T-cell (primary cell): ENCODE measurements at regions of chr2 and their contacts with region 1.

Region 1: DNA sequence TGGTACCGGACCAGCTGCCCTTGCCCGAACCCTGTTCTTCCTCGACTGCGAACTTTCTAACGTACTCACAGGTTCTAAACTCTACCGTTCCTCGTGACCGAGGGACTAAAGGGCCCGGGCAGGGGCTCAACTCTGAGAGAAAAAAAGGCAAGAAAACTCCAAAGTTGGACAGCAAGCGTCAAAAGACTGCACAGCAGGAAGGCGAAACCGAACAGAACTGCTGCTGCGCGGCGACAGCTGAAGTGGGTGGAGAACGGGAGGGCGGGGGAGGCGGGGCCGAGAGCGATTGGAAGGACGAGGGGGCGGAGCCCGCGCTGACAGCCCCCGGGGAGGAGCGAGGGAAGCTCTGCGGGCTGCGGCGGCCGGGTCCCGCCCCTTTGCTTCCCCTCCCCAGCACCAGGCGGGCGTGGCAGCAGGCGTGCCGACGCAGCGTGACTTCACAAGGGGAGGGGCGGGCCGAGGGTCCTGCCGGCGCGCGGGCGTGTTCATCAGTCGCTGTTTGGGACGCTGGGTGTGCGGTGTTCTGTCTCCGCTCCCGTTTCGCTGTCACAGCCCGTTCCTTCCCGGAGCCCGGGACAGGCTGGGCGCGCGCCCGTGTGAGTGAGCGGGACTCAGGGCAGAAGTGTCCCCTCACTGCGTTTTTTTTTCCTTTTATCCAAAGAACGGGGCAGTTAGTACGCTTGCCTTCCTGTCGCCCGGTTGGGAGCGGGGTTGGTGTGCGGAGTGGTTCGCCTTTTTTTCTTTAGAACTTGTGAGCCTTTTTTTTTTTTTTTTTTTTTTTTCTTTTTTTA is at the start of gene NABP1:
- DNase-seq: peak; percentile 93 to 100 (median 99)
- ATAC-seq: peak; percentile 88 to 95 (median 90)
- H3K4me3 ChIP-seq: peak within 1 kb of the TSS; percentile 78 to 93
- H3K4me3 Mint-ChIP-seq: peak within 1 kb of the TSS; percentile 97 to 99 (median 98)
- H3K27ac ChIP-seq: peak within 1 kb of the TSS; percentile 96
- H3K27ac Mint-ChIP-seq: peak within 1 kb of the TSS; percentile 100
- H3K4me1 ChIP-seq: peaks cover 36 to 37% of the 10 kb centered on the region in 2 experiments
- H3K4me1 Mint-ChIP-seq: peaks cover 58 to 70% (median 66%) of the 10 kb centered on the region in 3 donors
- H3K27me3 ChIP-seq: no peaks in the 10 kb centered on the region
- H3K27me3 Mint-ChIP-seq: no peaks in the 10 kb centered on the region
- total RNA-seq, gene NABP1: 39.0 to 67.6 (median 51.3) TPM

Region 2: GRCh38 chr2:189954989-189955388 is 1722.9 kb before region 1 on chr2:
- CTCF ChIA-PET with region 1: no interaction called
- POLR2A ChIA-PET with region 1: no interaction called
- DNase-seq: no peak
- ATAC-seq: no peak
- H3K4me3 ChIP-seq: no peak overlapping the region
- H3K4me3 Mint-ChIP-seq: no peak overlapping the region
- H3K27ac ChIP-seq: no peak overlapping the region
- H3K27ac Mint-ChIP-seq: no peak overlapping the region
- H3K4me1 ChIP-seq: no peaks in the 10 kb centered on the region
- H3K4me1 Mint-ChIP-seq: peaks cover 0 to 5% (median 2%) of the 10 kb centered on the region in 3 donors
- H3K27me3 ChIP-seq: no peaks in the 10 kb centered on the region
- H3K27me3 Mint-ChIP-seq: peaks cover 0 to 9% of the 10 kb centered on the region in 2 donors

Region 3: DNA sequence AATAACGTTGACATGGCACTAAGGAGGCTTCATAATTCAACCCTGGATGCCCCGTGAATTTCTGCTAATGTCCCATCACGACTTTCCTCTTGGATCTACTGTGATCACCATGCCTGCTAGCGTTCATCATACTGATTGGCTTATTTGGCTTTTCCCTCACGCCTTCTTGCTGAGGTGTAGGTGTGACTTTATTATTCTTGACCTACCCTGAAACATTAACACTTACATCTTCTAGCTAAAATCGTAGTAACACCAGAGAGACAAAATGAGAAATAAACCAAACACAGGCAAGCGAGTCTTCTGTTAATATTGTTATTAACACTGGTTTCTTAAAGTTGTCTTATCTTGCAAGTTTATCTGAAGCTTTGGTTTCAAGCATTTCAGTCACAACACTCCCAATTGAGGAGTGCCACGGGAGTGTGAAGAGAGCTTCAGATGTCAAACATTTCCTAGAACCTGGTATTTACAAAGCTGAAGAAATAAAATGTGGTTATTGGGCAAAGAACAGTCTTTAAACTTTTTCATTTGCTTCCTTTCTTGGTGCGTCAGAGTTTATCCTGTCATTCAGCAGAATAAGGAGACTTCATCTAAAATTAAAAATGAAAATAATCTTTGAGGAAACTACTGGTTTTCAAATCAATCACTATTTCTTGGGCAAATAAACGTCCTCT is 648.4 kb before region 1 on chr2:
- CTCF ChIA-PET with region 1: no interaction called
- POLR2A ChIA-PET with region 1: interaction called in 1 of 2 experiments, 11 read pairs
- DNase-seq: peak in 1 of 35 experiments; percentile 32
- ATAC-seq: peak in 3 of 4 experiments; percentile 8 to 74 (median 27)
- H3K4me3 ChIP-seq: no peak overlapping the region
- H3K4me3 Mint-ChIP-seq: peak overlapping the region in 2 of 3 donors; percentile 10 to 61
- H3K27ac ChIP-seq: peak overlapping the region; percentile 70
- H3K27ac Mint-ChIP-seq: peak overlapping the region; percentile 81 to 87
- H3K4me1 ChIP-seq: peaks cover 17 to 26% of the 10 kb centered on the region in 2 experiments
- H3K4me1 Mint-ChIP-seq: peaks cover 45 to 54% (median 50%) of the 10 kb centered on the region in 3 donors
- H3K27me3 ChIP-seq: no peaks in the 10 kb centered on the region
- H3K27me3 Mint-ChIP-seq: no peaks in the 10 kb centered on the region

Region 4: GRCh38 chr2:191566344-191566743 is 111.5 kb before region 1 on chr2:
- CTCF ChIA-PET with region 1: interaction called, 8 to 14 read pairs
- POLR2A ChIA-PET with region 1: interaction called in 1 of 2 experiments, 8 read pairs
- DNase-seq: peak; percentile 7 to 83 (median 55)
- ATAC-seq: peak; percentile 57 to 67 (median 65)
- H3K4me3 ChIP-seq: no peak overlapping the region
- H3K4me3 Mint-ChIP-seq: no peak overlapping the region
- H3K27ac ChIP-seq: no peak overlapping the region
- H3K27ac Mint-ChIP-seq: no peak overlapping the region
- H3K4me1 ChIP-seq: peaks cover 10 to 16% of the 10 kb centered on the region in 2 experiments
- H3K4me1 Mint-ChIP-seq: peaks cover 16 to 28% (median 17%) of the 10 kb centered on the region in 3 donors
- H3K27me3 ChIP-seq: peaks cover 0 to 13% of the 10 kb centered on the region in 2 experiments
- H3K27me3 Mint-ChIP-seq: peaks cover 20 to 25% of the 10 kb centered on the region in 2 donors

Region 5: GRCh38 chr2:191617575-191617974 is 60.3 kb before region 1 on chr2:
- CTCF ChIA-PET with region 1: interaction called in 1 of 2 experiments, 18 read pairs
- POLR2A ChIA-PET with region 1: interaction called, 22 to 48 read pairs
- DNase-seq: peak in 34 of 35 experiments; percentile 14 to 88 (median 46)
- ATAC-seq: peak; percentile 86 to 96 (median 92)
- H3K4me3 ChIP-seq: no peak overlapping the region
- H3K4me3 Mint-ChIP-seq: peak overlapping the region in 2 of 3 donors; percentile 6 to 15
- H3K27ac ChIP-seq: peak overlapping the region; percentile 89
- H3K27ac Mint-ChIP-seq: peak overlapping the region; percentile 91 to 99
- H3K4me1 ChIP-seq: peaks cover 13 to 17% of the 10 kb centered on the region in 2 experiments
- H3K4me1 Mint-ChIP-seq: peaks cover 42 to 52% (median 48%) of the 10 kb centered on the region in 3 donors
- H3K27me3 ChIP-seq: no peaks in the 10 kb centered on the region
- H3K27me3 Mint-ChIP-seq: no peaks in the 10 kb centered on the region

Region 6: GRCh38 chr2:191625016-191625415 is 52.8 kb before region 1 on chr2:
- CTCF ChIA-PET with region 1: interaction called in 1 of 2 experiments, 6 read pairs
- POLR2A ChIA-PET with region 1: interaction called, 7 to 28 read pairs
- DNase-seq: peak in 33 of 35 experiments; percentile 27 to 80 (median 56)
- ATAC-seq: peak; percentile 54 to 86 (median 78)
- H3K4me3 ChIP-seq: no peak overlapping the region
- H3K4me3 Mint-ChIP-seq: peak overlapping the region in 1 of 3 donors; percentile 10
- H3K27ac ChIP-seq: peak overlapping the region; percentile 78
- H3K27ac Mint-ChIP-seq: peak overlapping the region; percentile 41 to 47
- H3K4me1 ChIP-seq: peaks cover 2 to 22% of the 10 kb centered on the region in 2 experiments
- H3K4me1 Mint-ChIP-seq: peaks cover 59 to 81% (median 62%) of the 10 kb centered on the region in 3 donors
- H3K27me3 ChIP-seq: no peaks in the 10 kb centered on the region
- H3K27me3 Mint-ChIP-seq: no peaks in the 10 kb centered on the region

Region 7: GRCh38 chr2:191637182-191638078 is 40.4 kb before region 1 on chr2:
- CTCF ChIA-PET with region 1: interaction called, 3 to 4 read pairs
- POLR2A ChIA-PET with region 1: interaction called, 7 to 11 read pairs
- DNase-seq: peak in 1 of 35 experiments; percentile 56
- ATAC-seq: peak; percentile 90 to 98 (median 95)
- H3K4me3 ChIP-seq: no peak overlapping the region
- H3K4me3 Mint-ChIP-seq: peak overlapping the region; percentile 13 to 55 (median 51)
- H3K27ac ChIP-seq: peak overlapping the region; percentile 66
- H3K27ac Mint-ChIP-seq: peak overlapping the region; percentile 96
- H3K4me1 ChIP-seq: peaks cover 20 to 32% of the 10 kb centered on the region in 2 experiments
- H3K4me1 Mint-ChIP-seq: peaks cover 54 to 60% (median 59%) of the 10 kb centered on the region in 3 donors
- H3K27me3 ChIP-seq: no peaks in the 10 kb centered on the region
- H3K27me3 Mint-ChIP-seq: no peaks in the 10 kb centered on the region

Region 8: GRCh38 chr2:191740016-191740419 is 62.2 kb after region 1 on chr2:
- CTCF ChIA-PET with region 1: interaction called in 1 of 2 experiments, 5 read pairs
- POLR2A ChIA-PET with region 1: interaction called in 1 of 2 experiments, 10 read pairs
- DNase-seq: peak in 32 of 35 experiments; percentile 3 to 83 (median 34)
- ATAC-seq: peak; percentile 91 to 95 (median 94)
- H3K4me3 ChIP-seq: no peak overlapping the region
- H3K4me3 Mint-ChIP-seq: peak overlapping the region in 1 of 3 donors; percentile 0
- H3K27ac ChIP-seq: no peak overlapping the region
- H3K27ac Mint-ChIP-seq: peak overlapping the region; percentile 70 to 71
- H3K4me1 ChIP-seq: peaks cover 12 to 14% of the 10 kb centered on the region in 2 experiments
- H3K4me1 Mint-ChIP-seq: peaks cover 15 to 18% (median 16%) of the 10 kb centered on the region in 3 donors
- H3K27me3 ChIP-seq: peaks cover 0 to 4% of the 10 kb centered on the region in 2 experiments
- H3K27me3 Mint-ChIP-seq: peaks cover 2 to 22% of the 10 kb centered on the region in 2 donors

Region 9: GRCh38 chr2:192230889-192231453 is 553.1 kb after region 1 on chr2:
- CTCF ChIA-PET with region 1: no interaction called
- POLR2A ChIA-PET with region 1: no interaction called
- DNase-seq: no peak
- ATAC-seq: no peak
- H3K4me3 ChIP-seq: no peak overlapping the region
- H3K4me3 Mint-ChIP-seq: no peak overlapping the region
- H3K27ac ChIP-seq: no peak overlapping the region
- H3K27ac Mint-ChIP-seq: no peak overlapping the region
- H3K4me1 ChIP-seq: no peaks in the 10 kb centered on the region
- H3K4me1 Mint-ChIP-seq: no peaks in the 10 kb centered on the region
- H3K27me3 ChIP-seq: no peaks in the 10 kb centered on the region
- H3K27me3 Mint-ChIP-seq: no peaks in the 10 kb centered on the region